Caco-2 (cell line): ENCODE measurements at regions of chr4 and their contacts with region 1.

Region 1: GRCh38 chr4:151004222-151004621 is 10.9 kb downstream of the LRBA start:
- DNase-seq: no peak
- H3K4me3 ChIP-seq: no peak overlapping the region
- H3K4me3 Mint-ChIP-seq: no peak overlapping the region
- H3K27ac Mint-ChIP-seq: no peak overlapping the region
- H3K4me1 ChIP-seq: no peaks in the 10 kb centered on the region
- H3K4me1 Mint-ChIP-seq: no peaks in the 10 kb centered on the region
- H3K27me3 ChIP-seq: no peaks in the 10 kb centered on the region
- H3K27me3 Mint-ChIP-seq: no peaks in the 10 kb centered on the region
- CTCF ChIP-seq: no peak

Region 2: GRCh38 chr4:150773729-150774449 is 230.3 kb before region 1 on chr4:
- CTCF ChIA-PET with region 1: no interaction called
- POLR2A ChIA-PET with region 1: interaction called, 10 read pairs
- intact Hi-C with region 1: no loop called
- DNase-seq: no peak
- H3K4me3 ChIP-seq: no peak overlapping the region
- H3K4me3 Mint-ChIP-seq: no peak overlapping the region
- H3K27ac Mint-ChIP-seq: no peak overlapping the region
- H3K4me1 ChIP-seq: peaks cover 57% of the 10 kb centered on the region
- H3K4me1 Mint-ChIP-seq: peaks cover 32% of the 10 kb centered on the region
- H3K27me3 ChIP-seq: no peaks in the 10 kb centered on the region
- H3K27me3 Mint-ChIP-seq: no peaks in the 10 kb centered on the region
- CTCF ChIP-seq: no peak

Region 3: DNA sequence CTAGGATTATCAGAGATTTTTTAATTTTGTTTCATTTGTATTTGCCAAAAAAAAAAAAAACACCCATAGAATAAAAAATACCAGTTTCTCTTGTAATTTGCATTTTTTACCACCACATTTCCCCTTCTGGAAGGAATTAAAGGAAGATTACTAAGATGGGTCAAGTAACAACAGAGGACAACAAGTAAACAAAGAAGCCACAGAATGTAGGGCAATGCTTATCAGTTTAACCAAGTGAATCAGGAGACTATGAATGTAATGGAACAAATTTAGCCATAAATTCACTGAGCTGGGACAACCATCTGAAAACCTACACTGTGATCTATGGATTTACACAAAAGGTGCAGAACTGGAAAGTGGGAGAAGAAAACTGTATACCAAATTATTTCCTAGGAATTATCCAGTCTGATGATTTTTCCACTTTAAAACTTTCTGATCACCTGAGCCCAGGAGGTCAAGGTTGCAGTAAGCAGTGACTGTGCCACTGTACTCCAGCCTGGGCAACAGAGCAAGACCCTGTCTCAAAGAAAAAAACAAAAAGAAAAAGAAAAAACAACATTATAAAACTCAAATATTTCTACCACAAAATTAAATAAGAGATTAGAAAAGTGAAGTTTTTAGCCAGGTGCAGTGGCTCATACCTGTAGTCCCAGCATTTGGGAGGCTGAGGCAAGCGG is 21.5 kb before region 1 on chr4:
- CTCF ChIA-PET with region 1: no interaction called
- POLR2A ChIA-PET with region 1: interaction called, 11 read pairs
- intact Hi-C with region 1: no loop called
- DNase-seq: no peak
- H3K4me3 ChIP-seq: no peak overlapping the region
- H3K4me3 Mint-ChIP-seq: no peak overlapping the region
- H3K27ac Mint-ChIP-seq: no peak overlapping the region
- H3K4me1 ChIP-seq: no peaks in the 10 kb centered on the region
- H3K4me1 Mint-ChIP-seq: no peaks in the 10 kb centered on the region
- H3K27me3 ChIP-seq: no peaks in the 10 kb centered on the region
- H3K27me3 Mint-ChIP-seq: no peaks in the 10 kb centered on the region
- CTCF ChIP-seq: no peak

Region 4: GRCh38 chr4:151434183-151434860 is 430.1 kb after region 1 on chr4:
- CTCF ChIA-PET with region 1: no interaction called
- POLR2A ChIA-PET with region 1: no interaction called
- intact Hi-C with region 1: no loop called
- DNase-seq: no peak
- H3K4me3 ChIP-seq: no peak overlapping the region
- H3K4me3 Mint-ChIP-seq: no peak overlapping the region
- H3K27ac Mint-ChIP-seq: no peak overlapping the region
- H3K4me1 ChIP-seq: peaks cover 6% of the 10 kb centered on the region; the same call in 1 of the 2 replicates
- H3K4me1 Mint-ChIP-seq: peaks cover 11% of the 10 kb centered on the region
- H3K27me3 ChIP-seq: no peaks in the 10 kb centered on the region
- H3K27me3 Mint-ChIP-seq: no peaks in the 10 kb centered on the region
- CTCF ChIP-seq: no peak